Right ventricle myocardium superior (tissue), 1 donor: ENCODE measurements at regions of chr15 and their contacts with region 1.

Region 1: GRCh38 chr15:32942401-32942841 is 224.6 kb downstream of the GREM1 start:
- DNase-seq: no peak
- ATAC-seq: peak; percentile 78

Region 2: DNA sequence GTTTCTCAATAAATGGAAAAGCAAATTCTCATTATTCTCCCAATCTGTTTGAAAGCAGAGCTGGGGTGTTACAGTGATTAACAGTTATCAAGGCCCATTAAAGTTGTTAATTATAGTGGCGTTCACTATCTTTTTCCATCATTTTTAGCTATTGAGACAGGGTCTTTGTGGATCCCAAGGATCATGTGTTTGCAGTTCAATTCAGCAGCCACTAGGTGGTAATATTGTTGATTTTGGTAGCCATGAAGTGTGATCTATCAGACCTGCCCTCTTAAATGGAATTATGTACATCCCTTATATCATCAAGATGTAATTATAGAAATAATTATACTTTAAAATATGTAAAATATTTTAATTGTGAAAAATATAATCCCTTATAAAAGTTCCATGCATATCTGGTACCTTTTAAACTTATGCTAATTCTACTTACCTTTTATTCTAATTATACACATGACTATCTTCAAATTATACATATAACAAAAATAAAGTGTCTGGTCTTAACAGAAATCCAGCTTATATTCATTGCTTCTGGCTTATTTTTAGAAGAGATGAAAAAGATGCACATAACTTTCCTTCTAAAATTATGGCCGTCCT is 98.2 kb before region 1 on chr15:
- intact Hi-C with region 1: loop called (anchors 10 kb)
- DNase-seq: no peak
- ATAC-seq: no peak